K562 (cell line): ENCODE measurements at regions of chr15 and their contacts with region 1.

Region 1: GRCh38 chr15:89416141-89416853 is 80.1 kb downstream of the RHCG start:
- DNase-seq: peak; percentile 86 to 92 (median 90)
- ATAC-seq: peak; percentile 95
- H3K4me3 ChIP-seq: no peak overlapping the region
- H3K27ac ChIP-seq: no peak overlapping the region
- H3K4me1 ChIP-seq: peaks cover 0 to 12% of the 10 kb centered on the region in 2 experiments; a peak in 2 of 5 replicates
- H3K27me3 ChIP-seq: peaks cover 5 to 48% of the 10 kb centered on the region in 2 experiments; a peak in 3 of 5 replicates
- CTCF ChIP-seq: peak; percentile 98 to 99 (median 99)
- EP300 ChIP-seq: no peak
- POLR2A ChIP-seq: no peak
- RAD21 ChIP-seq: peak; percentile 14 to 55; a peak in 3 of 4 replicates

Region 2: DNA sequence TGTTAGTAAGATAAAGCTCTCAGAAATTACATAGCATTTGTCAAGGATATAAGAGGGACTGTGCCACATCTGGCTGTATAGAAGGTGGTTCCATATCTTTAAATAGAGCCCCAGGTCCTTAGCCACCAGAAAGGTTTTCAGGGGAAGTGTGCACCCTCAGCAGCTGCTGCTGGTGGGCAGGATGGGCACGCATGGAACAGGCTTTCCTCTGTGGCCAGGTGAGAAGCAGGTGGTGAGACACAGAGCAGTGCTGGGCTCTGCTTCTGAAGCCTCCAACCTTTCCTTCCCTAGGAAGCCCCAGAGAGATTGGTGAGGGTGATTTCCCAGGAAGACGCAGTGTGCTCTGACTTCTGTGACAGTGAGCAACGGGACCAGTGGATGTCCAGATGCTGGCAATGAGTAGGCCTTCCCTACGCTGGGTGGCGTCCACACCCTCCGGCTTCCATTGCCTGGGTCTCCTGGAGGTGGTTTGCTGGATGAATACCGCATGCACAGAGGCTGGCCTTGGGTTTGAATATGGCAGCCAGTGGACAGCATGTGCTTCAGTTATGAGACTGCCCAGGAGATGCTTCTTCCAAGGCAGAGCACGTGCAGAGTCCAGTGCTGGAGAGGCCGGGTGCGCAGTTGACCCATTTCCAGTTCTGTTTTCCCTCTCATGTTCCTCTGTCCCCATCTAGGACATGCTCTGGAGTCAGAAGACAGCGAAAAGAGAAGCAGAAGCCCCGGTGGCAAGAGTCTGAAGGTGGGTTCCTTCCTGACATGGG is 29.0 kb before region 1 on chr15:
- CTCF ChIA-PET with region 1: no interaction called
- POLR2A ChIA-PET with region 1: no interaction called
- in situ Hi-C with region 1: no loop called
- intact Hi-C with region 1: no loop called
- DNase-seq: no peak
- ATAC-seq: no peak
- H3K4me3 ChIP-seq: no peak overlapping the region
- H3K27ac ChIP-seq: no peak overlapping the region
- H3K4me1 ChIP-seq: 0 out of 5 replicates have a peak, but pooled peaks cover 0 to 3% of the 10 kb centered on the region in 2 experiments
- H3K27me3 ChIP-seq: peaks cover 5 to 56% of the 10 kb centered on the region in 2 experiments
- CTCF ChIP-seq: no peak
- EP300 ChIP-seq: no peak
- POLR2A ChIP-seq: no peak
- RAD21 ChIP-seq: no peak

Region 3: GRCh38 chr15:89400121-89400996 is 15.9 kb before region 1 on chr15:
- CTCF ChIA-PET with region 1: no interaction called
- POLR2A ChIA-PET with region 1: no interaction called
- in situ Hi-C with region 1: no loop called
- intact Hi-C with region 1: no loop called
- DNase-seq: no peak
- ATAC-seq: peak; percentile 42
- H3K4me3 ChIP-seq: peak overlapping the region; percentile 42
- H3K27ac ChIP-seq: no peak overlapping the region
- H3K4me1 ChIP-seq: peaks cover 0 to 16% of the 10 kb centered on the region in 2 experiments; a peak in 3 of 5 replicates
- H3K27me3 ChIP-seq: peaks cover 10 to 32% of the 10 kb centered on the region in 2 experiments
- CTCF ChIP-seq: no peak
- EP300 ChIP-seq: no peak
- POLR2A ChIP-seq: no peak
- RAD21 ChIP-seq: no peak

Region 4: DNA sequence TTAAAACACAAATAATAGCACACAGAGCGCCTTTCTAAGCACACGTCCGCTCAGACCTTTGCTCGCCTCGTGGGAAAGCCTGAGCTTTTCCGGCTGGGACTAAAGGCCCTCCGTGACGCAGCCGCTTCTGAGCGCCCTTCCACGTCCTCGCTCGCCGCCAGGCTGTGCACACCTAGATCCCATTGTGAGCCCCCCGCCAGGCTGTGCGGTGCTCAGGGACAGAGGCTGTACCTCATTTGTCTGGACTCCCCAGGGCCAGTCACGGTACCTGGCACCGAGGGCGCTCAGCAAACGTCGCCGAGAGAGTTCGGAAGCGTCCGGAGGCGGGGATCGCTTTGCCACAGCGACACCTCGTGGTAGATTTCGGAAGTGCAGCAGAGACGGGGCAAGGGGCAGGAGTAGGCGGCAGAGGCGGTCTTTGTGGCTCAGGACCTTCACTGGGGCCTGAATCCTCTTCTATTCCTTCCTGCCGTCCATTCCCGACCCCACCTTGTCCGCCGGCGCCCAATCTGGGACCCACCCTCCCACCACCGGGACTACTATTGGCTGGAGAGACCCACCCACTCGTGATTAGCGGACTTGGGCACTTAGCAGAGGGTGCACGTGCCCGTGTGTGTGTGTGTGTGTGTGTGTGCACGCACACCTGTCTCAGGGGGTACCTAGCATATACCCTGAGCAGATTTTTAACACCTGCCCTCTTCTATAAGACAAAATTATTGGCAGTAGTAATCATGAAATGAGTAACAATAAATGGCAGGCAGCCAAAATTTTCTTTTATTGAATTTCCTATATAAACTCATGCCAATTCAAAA is 14.4 kb after region 1 on chr15:
- CTCF ChIA-PET with region 1: interaction called, 10 read pairs
- POLR2A ChIA-PET with region 1: interaction called, 3 read pairs
- in situ Hi-C with region 1: no loop called
- intact Hi-C with region 1: loop called (anchors 2 kb)
- DNase-seq: peak; percentile 84 to 92 (median 88)
- ATAC-seq: peak; percentile 99
- H3K4me3 ChIP-seq: peak overlapping the region; percentile 17
- H3K27ac ChIP-seq: no peak overlapping the region
- H3K4me1 ChIP-seq: peaks cover 0 to 7% of the 10 kb centered on the region in 2 experiments; a peak in 2 of 5 replicates
- H3K27me3 ChIP-seq: peaks cover 3 to 26% of the 10 kb centered on the region in 2 experiments; a peak in 3 of 5 replicates
- CTCF ChIP-seq: peak; percentile 94 to 97 (median 95)
- EP300 ChIP-seq: no peak
- POLR2A ChIP-seq: no peak
- RAD21 ChIP-seq: peak; percentile 77 to 87